Panc1 (cell line): ENCODE measurements at regions of chr3 and their contacts with region 1.

Region 1: DNA sequence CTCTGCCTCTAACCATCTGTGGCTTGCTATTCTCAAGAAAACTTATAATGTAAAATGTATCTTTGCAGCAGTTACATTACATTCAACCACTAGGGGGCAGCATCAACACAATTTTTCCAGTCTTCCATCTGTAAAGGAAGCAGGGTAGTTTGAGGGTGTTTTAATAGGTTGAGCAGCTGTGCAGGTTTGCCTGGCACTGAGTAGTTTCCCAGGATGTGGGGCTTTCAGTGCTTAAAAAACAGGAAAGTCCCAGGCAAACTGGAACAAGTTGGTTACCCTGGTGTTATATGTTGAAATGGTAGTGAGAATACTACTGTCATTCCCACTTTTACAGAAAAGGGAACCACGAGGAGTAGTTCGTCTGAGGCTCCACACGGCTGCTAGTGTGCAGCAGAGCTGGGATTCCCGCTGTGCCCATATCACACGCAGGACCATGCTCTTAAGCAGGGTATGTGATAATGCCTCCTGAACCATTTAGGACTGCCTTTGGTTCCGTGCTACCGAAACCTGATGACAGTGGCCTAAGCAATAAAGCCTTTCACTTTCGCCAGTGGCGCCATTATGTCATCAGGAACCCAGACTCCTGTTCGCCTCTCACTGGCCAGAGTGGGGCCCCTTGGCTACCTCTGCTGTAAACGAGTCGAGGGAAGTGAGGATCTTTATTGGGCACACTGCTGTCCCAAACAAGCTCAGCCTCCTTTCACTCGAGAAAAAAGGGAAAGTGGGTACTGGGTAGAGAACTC is 64.7 kb upstream of the ZBTB38 start:
- DNase-seq: peak; percentile 58
- ATAC-seq: peak; percentile 80
- H3K4me3 ChIP-seq: no peak overlapping the region
- H3K27ac ChIP-seq: no peak overlapping the region
- H3K4me1 ChIP-seq: no peaks in the 10 kb centered on the region
- H3K27me3 ChIP-seq: no peaks in the 10 kb centered on the region
- CTCF ChIP-seq: peak; percentile 87

Region 2: DNA sequence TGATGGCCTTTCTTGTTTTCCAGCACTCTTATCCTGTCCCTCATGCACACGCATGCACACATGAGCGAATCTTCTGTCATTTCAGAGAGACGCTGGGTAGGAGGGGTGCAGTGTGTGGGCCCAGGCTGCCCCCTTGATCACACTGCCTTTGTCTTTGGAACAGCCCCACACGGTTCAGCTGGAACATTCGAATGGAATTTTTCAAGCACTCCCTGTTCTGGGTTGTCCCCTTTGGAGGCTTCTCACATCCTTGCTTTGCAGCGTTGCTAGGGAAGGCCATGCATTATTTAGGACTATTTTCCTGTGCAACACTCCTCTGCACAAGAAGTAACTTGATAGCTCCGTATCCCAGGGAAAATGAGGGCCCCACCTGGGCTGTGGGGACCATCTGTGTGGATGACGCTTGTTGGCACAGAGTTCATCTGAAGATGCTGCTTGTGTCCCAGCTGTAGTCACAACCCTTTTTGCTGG is 174.1 kb before region 1 on chr3:
- CTCF ChIA-PET with region 1: no interaction called
- POLR2A ChIA-PET with region 1: no interaction called
- in situ Hi-C with region 1: no loop called
- intact Hi-C with region 1: no loop called
- DNase-seq: no peak
- ATAC-seq: no peak
- H3K4me3 ChIP-seq: no peak overlapping the region
- H3K27ac ChIP-seq: no peak overlapping the region
- H3K4me1 ChIP-seq: no peaks in the 10 kb centered on the region
- H3K27me3 ChIP-seq: peaks cover 9% of the 10 kb centered on the region
- CTCF ChIP-seq: no peak

Region 3: GRCh38 chr3:141387516-141387915 is 83.9 kb after region 1 on chr3:
- CTCF ChIA-PET with region 1: interaction called, 10 read pairs
- POLR2A ChIA-PET with region 1: no interaction called
- in situ Hi-C with region 1: no loop called
- intact Hi-C with region 1: no loop called
- DNase-seq: no peak
- ATAC-seq: no peak
- H3K4me3 ChIP-seq: no peak overlapping the region
- H3K27ac ChIP-seq: no peak overlapping the region
- H3K4me1 ChIP-seq: no peaks in the 10 kb centered on the region
- H3K27me3 ChIP-seq: no peaks in the 10 kb centered on the region
- CTCF ChIP-seq: no peak

Region 4: GRCh38 chr3:141452036-141452435 is 148.4 kb after region 1 on chr3:
- CTCF ChIA-PET with region 1: interaction called, 12 read pairs
- POLR2A ChIA-PET with region 1: no interaction called
- in situ Hi-C with region 1: no loop called
- intact Hi-C with region 1: loop called (anchors 2 kb)
- DNase-seq: peak; percentile 47
- ATAC-seq: peak; percentile 66
- H3K4me3 ChIP-seq: no peak overlapping the region
- H3K27ac ChIP-seq: no peak overlapping the region
- H3K4me1 ChIP-seq: no peaks in the 10 kb centered on the region
- H3K27me3 ChIP-seq: no peaks in the 10 kb centered on the region
- CTCF ChIP-seq: peak; percentile 82

Region 5: GRCh38 chr3:141491929-141492328 is 188.3 kb after region 1 on chr3:
- CTCF ChIA-PET with region 1: interaction called, 10 read pairs
- POLR2A ChIA-PET with region 1: no interaction called
- in situ Hi-C with region 1: no loop called
- intact Hi-C with region 1: no loop called
- DNase-seq: no peak
- ATAC-seq: no peak
- H3K4me3 ChIP-seq: no peak overlapping the region
- H3K27ac ChIP-seq: no peak overlapping the region
- H3K4me1 ChIP-seq: peaks cover 6% of the 10 kb centered on the region
- H3K27me3 ChIP-seq: no peaks in the 10 kb centered on the region
- CTCF ChIP-seq: no peak

Region 6: DNA sequence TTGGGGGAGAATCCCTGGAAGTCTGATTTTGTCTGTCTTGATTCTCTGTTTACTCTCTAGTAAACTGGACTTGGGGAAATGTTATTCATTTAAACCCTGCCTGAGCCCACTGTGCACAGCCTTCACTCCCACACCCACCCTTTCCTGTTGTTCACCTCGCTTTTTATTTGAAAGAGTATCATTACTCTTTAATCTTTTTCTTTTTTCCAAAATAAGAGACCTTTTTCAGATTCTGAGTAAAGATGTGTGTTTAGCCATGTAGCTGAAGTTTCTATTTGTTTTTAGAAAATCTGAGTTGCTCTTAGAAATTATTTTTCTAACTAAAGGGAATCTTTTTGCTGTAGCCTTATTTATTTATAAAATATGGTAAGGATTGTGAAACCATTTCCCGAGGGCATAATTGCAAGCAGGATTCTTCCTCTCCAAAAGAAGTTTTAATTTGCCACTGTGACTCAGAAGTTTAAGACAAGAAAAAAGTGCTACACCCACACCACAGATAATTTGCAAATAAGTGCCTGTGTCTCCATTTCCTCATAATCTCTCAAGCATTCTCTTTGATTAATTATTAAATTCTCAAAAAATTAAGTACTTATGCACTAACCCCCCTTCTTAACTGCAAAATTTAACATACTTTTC is 226.6 kb after region 1 on chr3:
- CTCF ChIA-PET with region 1: interaction called, 13 read pairs
- POLR2A ChIA-PET with region 1: no interaction called
- in situ Hi-C with region 1: no loop called
- intact Hi-C with region 1: no loop called
- DNase-seq: no peak
- ATAC-seq: no peak
- H3K4me3 ChIP-seq: no peak overlapping the region
- H3K27ac ChIP-seq: no peak overlapping the region
- H3K4me1 ChIP-seq: no peaks in the 10 kb centered on the region
- H3K27me3 ChIP-seq: no peaks in the 10 kb centered on the region
- CTCF ChIP-seq: no peak

Region 7: DNA sequence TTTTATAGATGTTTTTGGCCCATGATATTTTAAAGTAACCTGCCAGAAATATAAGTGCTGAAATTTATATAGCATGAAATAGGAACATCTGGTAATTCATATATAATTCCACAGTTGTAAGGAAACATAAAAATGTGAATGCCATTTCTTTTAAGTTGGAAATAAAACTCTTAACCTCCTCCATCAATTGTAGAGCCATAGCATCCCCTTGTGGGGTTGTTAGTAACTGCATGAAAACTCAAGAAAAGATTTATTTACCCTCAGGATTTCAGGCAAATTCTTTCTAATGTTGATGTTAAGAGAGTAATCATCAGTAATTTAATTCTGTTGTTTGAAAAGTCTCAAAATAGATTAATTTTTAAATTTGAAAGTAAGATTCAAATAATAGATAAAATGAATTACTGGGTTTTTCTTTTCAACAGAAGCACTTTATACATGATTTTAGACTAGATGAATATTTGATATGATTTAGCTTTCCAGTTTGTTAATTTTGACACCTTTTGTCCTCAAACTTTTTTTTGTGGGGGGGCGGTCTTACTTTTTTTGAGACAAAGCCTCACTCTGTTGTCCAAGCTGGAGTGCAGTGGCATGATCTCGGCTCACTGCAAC is 257.9 kb after region 1 on chr3:
- CTCF ChIA-PET with region 1: no interaction called
- POLR2A ChIA-PET with region 1: no interaction called
- in situ Hi-C with region 1: no loop called
- intact Hi-C with region 1: loop called (anchors 5 kb)
- DNase-seq: peak; percentile 60
- ATAC-seq: no peak
- H3K4me3 ChIP-seq: no peak overlapping the region
- H3K27ac ChIP-seq: no peak overlapping the region
- H3K4me1 ChIP-seq: no peaks in the 10 kb centered on the region
- H3K27me3 ChIP-seq: no peaks in the 10 kb centered on the region
- CTCF ChIP-seq: peak; percentile 97; the same call in 1 of the 2 replicates